CD8-positive, alpha-beta T cell (primary cell): ENCODE measurements at regions of chrX and their contacts with region 1.

Region 1: DNA sequence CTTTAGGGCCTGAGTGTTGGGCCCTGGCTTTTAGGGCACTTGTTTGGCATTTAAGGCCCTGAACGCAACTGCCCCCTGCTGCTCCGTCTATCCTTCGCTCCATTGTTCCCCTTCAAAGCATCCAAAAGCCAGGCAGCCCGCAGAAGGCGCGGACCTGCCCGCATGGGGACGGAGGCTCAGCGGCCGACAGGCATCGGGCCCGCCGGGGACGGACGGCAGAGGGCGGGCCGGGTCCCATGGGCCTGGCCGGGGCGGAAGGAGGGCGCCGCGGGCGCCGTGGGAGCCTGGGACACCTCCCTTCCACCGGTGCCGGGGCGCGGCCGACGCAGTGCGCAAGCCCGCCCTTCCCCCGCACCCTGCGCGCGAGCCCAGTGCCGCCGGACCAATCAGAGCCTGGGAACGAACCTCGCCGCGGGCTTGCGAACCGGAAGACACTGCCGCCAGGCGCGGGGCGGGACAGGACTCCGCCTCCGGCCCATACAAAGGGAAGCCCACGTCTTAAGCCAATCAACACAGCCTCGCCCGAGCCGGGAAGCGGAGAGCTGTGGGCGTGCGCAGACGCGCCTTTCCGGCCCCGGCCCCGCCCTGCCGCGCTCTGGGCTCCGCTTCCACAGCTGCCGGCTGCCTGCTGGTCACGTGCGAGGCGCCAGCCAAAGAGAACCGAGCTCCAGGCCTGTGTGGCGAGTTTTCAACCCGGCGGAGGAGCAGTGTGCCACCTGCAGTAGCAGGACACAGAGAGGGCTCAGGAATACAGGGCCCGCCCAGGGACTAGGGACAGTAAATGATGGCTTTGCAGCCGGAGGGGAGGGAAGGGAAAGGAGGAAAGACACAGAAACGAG is 2.1 kb upstream of the ARHGAP4 start:
- DNase-seq: peak; percentile 81 to 97 (median 92)
- ATAC-seq: peak; percentile 69
- H3K4me3 ChIP-seq: peak overlapping the region; percentile 68 to 87
- H3K4me3 Mint-ChIP-seq: peak overlapping the region; percentile 87
- H3K27ac ChIP-seq: peak overlapping the region; percentile 95 to 98
- H3K27ac Mint-ChIP-seq: peak overlapping the region; percentile 99
- H3K4me1 ChIP-seq: peaks cover 14% of the 10 kb centered on the region
- H3K4me1 Mint-ChIP-seq: peaks cover 31% of the 10 kb centered on the region
- H3K27me3 ChIP-seq: no peaks in the 10 kb centered on the region
- H3K27me3 Mint-ChIP-seq: no peaks in the 10 kb centered on the region
- CTCF ChIP-seq: no peak

Region 2: DNA sequence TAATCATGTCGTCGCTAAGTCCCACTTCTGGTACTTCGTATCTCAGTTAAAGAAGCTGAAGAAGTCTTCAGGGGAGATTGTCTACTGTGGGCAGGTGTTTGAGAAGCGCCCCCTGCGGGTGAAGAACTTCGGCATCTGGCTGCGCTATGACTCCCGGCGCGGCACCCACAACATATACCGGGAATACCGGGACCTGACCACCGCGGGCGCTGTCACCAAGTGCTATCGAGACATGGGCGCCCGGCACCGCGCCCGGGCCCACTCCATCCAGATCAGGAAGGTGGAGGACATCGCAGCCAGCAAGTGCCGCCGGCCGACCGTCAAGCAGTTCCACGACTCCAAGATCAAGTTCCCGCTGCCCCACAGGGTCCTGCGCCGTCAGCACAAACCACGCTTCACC is 265.9 kb before region 1 on chrX:
- CTCF ChIA-PET with region 1: no interaction called
- POLR2A ChIA-PET with region 1: no interaction called
- intact Hi-C with region 1: no loop called
- DNase-seq: peak; percentile 31 to 74 (median 62)
- ATAC-seq: no peak
- H3K4me3 ChIP-seq: peak overlapping the region in 1 of 2 experiments; percentile 18
- H3K4me3 Mint-ChIP-seq: peak overlapping the region; percentile 57
- H3K27ac ChIP-seq: no peak overlapping the region
- H3K27ac Mint-ChIP-seq: no peak overlapping the region
- H3K4me1 ChIP-seq: no peaks in the 10 kb centered on the region
- H3K4me1 Mint-ChIP-seq: peaks cover 3% of the 10 kb centered on the region
- H3K27me3 ChIP-seq: peaks cover 0 to 3% of the 10 kb centered on the region in 2 experiments
- H3K27me3 Mint-ChIP-seq: peaks cover 9% of the 10 kb centered on the region
- CTCF ChIP-seq: peak; percentile 21

Region 3: GRCh38 chrX:153724252-153725040 is 203.7 kb before region 1 on chrX and contains the starts of genes ABCD1 and BCAP31:
- CTCF ChIA-PET with region 1: no interaction called
- POLR2A ChIA-PET with region 1: no interaction called
- intact Hi-C with region 1: loop called in 1 of 2 experiments (anchors 1 kb)
- DNase-seq: peak; percentile 78 to 92 (median 86)
- ATAC-seq: peak; percentile 78
- H3K4me3 ChIP-seq: peak within 1 kb of the TSS; percentile 59 to 63
- H3K4me3 Mint-ChIP-seq: peak within 1 kb of the TSS; percentile 84
- H3K27ac ChIP-seq: peak within 1 kb of the TSS; percentile 64 to 81
- H3K27ac Mint-ChIP-seq: peak within 1 kb of the TSS; percentile 83
- H3K4me1 ChIP-seq: peaks cover 31% of the 10 kb centered on the region
- H3K4me1 Mint-ChIP-seq: peaks cover 33% of the 10 kb centered on the region
- H3K27me3 ChIP-seq: no peaks in the 10 kb centered on the region
- H3K27me3 Mint-ChIP-seq: no peaks in the 10 kb centered on the region
- CTCF ChIP-seq: no peak
- total RNA-seq, gene ABCD1: 5.2 to 6.4 TPM
- total RNA-seq, gene BCAP31: 35.3 to 39.1 TPM

Region 4: GRCh38 chrX:153782313-153782712 is 145.8 kb before region 1 on chrX:
- CTCF ChIA-PET with region 1: no interaction called
- POLR2A ChIA-PET with region 1: no interaction called
- intact Hi-C with region 1: no loop called
- DNase-seq: no peak
- ATAC-seq: no peak
- H3K4me3 ChIP-seq: no peak overlapping the region
- H3K4me3 Mint-ChIP-seq: no peak overlapping the region
- H3K27ac ChIP-seq: no peak overlapping the region
- H3K27ac Mint-ChIP-seq: no peak overlapping the region
- H3K4me1 ChIP-seq: no peaks in the 10 kb centered on the region
- H3K4me1 Mint-ChIP-seq: peaks cover 4% of the 10 kb centered on the region
- H3K27me3 ChIP-seq: no peaks in the 10 kb centered on the region
- H3K27me3 Mint-ChIP-seq: peaks cover 8% of the 10 kb centered on the region
- CTCF ChIP-seq: no peak

Region 5: DNA sequence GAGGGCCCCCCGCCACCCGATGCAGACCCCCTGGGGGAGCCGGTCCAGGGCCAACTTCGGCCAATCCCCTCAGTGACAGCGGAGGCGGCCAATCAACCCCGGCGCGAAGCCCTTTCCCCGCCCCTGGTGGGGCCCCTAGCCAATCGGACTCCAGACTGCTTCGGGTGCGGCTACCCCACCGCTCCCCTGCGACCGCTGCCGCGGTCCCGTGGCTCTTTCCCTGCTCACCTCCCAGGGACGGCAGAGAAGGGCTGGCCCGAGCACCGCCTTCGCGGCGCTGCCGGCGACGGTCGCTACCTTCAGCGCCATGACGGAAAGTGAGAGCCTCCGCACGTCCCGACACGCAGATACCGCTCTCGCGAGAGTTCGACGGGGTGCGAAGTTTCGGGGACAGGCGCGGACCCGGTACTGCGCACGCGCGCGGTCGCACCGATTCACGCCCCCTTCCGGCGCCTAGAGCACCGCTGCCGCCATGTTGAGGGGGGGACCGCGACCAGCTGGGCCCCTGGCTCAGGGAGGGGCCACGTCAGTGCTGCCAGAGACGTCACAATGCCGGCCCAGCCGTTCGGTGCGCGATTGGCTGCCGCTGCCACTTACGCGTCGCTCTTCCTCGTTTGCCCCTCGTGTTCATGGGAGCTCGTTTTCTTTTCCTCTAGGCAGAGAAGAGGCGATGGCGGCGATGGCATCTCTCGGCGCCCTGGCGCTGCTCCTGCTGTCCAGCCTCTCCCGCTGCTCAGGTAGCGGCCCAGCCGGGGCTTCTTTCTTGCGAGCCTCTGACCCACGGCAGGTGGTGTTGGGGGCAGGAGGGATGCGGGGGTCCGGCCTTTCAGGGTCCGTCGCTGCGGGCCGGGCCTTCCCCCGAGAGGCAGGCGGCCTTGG is 133.9 kb before region 1 on chrX and contains the starts of genes IDH3G and SSR4:
- CTCF ChIA-PET with region 1: interaction called, 3 read pairs
- POLR2A ChIA-PET with region 1: interaction called, 26 read pairs
- intact Hi-C with region 1: loop called (anchors 1 to 5 kb)
- DNase-seq: peak; percentile 84 to 96 (median 90)
- ATAC-seq: peak; percentile 92
- H3K4me3 ChIP-seq: peak within 1 kb of the TSS; percentile 83 to 86
- H3K4me3 Mint-ChIP-seq: peak within 1 kb of the TSS; percentile 90
- H3K27ac ChIP-seq: peak within 1 kb of the TSS; percentile 92 to 95
- H3K27ac Mint-ChIP-seq: peak within 1 kb of the TSS; percentile 95
- H3K4me1 ChIP-seq: peaks cover 34% of the 10 kb centered on the region
- H3K4me1 Mint-ChIP-seq: peaks cover 30% of the 10 kb centered on the region
- H3K27me3 ChIP-seq: no peaks in the 10 kb centered on the region
- H3K27me3 Mint-ChIP-seq: no peaks in the 10 kb centered on the region
- CTCF ChIP-seq: no peak
- total RNA-seq, gene IDH3G: 55.8 to 56.5 TPM
- total RNA-seq, gene SSR4: 175 TPM

Region 6: GRCh38 chrX:153909024-153909970 is 18.8 kb before region 1 on chrX:
- CTCF ChIA-PET with region 1: interaction called, 9 read pairs
- POLR2A ChIA-PET with region 1: interaction called, 17 read pairs
- intact Hi-C with region 1: no loop called
- DNase-seq: no peak
- ATAC-seq: no peak
- H3K4me3 ChIP-seq: no peak overlapping the region
- H3K4me3 Mint-ChIP-seq: no peak overlapping the region
- H3K27ac ChIP-seq: no peak overlapping the region
- H3K27ac Mint-ChIP-seq: no peak overlapping the region
- H3K4me1 ChIP-seq: peaks cover 36% of the 10 kb centered on the region
- H3K4me1 Mint-ChIP-seq: peaks cover 24% of the 10 kb centered on the region
- H3K27me3 ChIP-seq: no peaks in the 10 kb centered on the region
- H3K27me3 Mint-ChIP-seq: no peaks in the 10 kb centered on the region
- CTCF ChIP-seq: no peak

Region 7: DNA sequence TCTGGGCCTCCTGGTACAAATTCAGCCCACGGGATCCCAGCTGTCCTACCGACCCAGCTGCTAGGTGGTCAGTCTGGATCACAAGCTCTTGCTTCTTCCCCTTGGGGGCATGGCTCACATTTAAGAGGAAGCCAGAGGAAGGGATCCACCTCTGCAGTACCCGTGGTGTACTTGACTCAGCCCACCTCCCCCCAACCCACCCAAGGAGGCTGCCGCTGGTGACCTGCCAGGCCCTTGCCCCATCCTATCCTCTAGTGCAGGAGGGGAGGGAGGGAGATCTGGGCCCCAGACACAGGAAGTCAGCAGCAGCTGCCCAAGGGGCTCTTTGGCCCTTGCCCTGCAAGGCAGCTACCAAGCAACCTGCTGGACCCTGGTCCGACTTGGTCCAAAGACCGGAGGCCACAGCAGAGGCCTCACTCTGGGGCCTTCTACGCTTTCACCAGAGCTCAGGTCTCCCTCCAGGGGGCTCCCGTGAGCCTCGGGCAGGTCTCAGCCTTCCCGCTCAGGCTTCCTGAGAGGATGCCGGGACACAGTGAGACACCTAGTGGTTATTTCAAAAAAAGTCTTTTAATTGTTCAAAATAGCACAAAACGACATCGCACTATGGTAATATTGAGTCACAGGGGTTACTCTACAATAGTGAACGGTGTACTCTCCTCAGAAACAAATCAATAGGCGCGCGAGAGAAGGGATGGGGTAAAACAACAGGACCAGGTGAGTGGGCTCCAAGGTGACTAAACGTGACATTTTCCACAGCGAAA is 19.0 kb after region 1 on chrX:
- CTCF ChIA-PET with region 1: interaction called, 205 read pairs
- POLR2A ChIA-PET with region 1: interaction called, 100 read pairs
- intact Hi-C with region 1: loop called (anchors 1 kb)
- DNase-seq: peak; percentile 57 to 87 (median 81)
- ATAC-seq: peak; percentile 87
- H3K4me3 ChIP-seq: no peak overlapping the region
- H3K4me3 Mint-ChIP-seq: peak overlapping the region; percentile 27
- H3K27ac ChIP-seq: peak overlapping the region in 1 of 2 experiments; percentile 53
- H3K27ac Mint-ChIP-seq: peak overlapping the region; percentile 81
- H3K4me1 ChIP-seq: peaks cover 42% of the 10 kb centered on the region
- H3K4me1 Mint-ChIP-seq: peaks cover 13% of the 10 kb centered on the region
- H3K27me3 ChIP-seq: no peaks in the 10 kb centered on the region
- H3K27me3 Mint-ChIP-seq: no peaks in the 10 kb centered on the region
- CTCF ChIP-seq: peak; percentile 71

Region 8: GRCh38 chrX:154097597-154098541 is 169.7 kb after region 1 on chrX and contains the start of gene MECP2:
- CTCF ChIA-PET with region 1: no interaction called
- POLR2A ChIA-PET with region 1: no interaction called
- intact Hi-C with region 1: loop called in 1 of 2 experiments (anchors 1 kb)
- DNase-seq: peak; percentile 72 to 93 (median 83)
- ATAC-seq: peak; percentile 88
- H3K4me3 ChIP-seq: peak within 1 kb of the TSS; percentile 84 to 85
- H3K4me3 Mint-ChIP-seq: peak within 1 kb of the TSS; percentile 97
- H3K27ac ChIP-seq: peak within 1 kb of the TSS; percentile 88 to 90
- H3K27ac Mint-ChIP-seq: peak within 1 kb of the TSS; percentile 99
- H3K4me1 ChIP-seq: peaks cover 34% of the 10 kb centered on the region
- H3K4me1 Mint-ChIP-seq: peaks cover 34% of the 10 kb centered on the region
- H3K27me3 ChIP-seq: no peaks in the 10 kb centered on the region
- H3K27me3 Mint-ChIP-seq: no peaks in the 10 kb centered on the region
- CTCF ChIP-seq: no peak
- total RNA-seq, gene MECP2: 106 to 204 TPM